CD14-positive monocyte (primary cell): ENCODE measurements at regions of chr16 and their contacts with region 1.

Region 1: DNA sequence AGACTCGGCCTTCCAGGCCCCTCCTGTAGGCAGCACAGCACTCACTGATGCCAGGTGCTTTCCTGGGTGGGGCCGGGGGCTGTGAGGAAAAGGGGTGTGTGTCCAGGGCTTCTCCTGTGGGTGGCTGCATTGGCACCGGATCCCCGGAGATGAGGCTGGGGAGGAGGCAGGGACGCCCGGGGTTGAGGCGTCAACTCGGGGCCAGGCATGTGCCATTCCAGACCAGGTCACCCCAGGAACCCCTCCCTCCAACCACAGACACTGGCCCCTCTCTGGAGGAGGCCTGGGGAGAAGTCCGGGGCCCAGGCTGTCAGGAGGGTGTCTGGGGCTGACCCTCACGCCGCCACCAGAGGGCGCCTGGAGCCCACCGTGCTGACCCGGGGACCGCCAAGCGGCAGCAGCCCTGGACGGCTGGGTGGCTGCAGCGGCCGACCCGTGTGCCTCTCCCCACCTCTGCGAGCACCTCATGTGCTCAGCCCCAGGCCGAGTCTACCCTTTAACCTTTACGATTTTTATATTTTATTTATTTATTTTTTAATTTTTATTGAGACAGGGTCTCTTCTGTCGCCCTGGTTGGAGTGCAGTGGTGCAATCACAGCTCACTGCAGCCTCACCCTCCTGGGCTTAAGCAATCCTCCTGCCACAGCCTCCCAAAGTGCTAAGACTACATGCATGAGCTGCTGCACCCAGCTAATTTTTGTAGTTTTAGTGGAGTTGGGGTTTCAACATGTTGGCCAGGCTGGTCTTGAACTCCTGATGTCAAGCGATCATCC is 3.2 kb upstream of the METRN start:
- DNase-seq: peak; percentile 67 to 79 (median 71)
- H3K4me3 ChIP-seq: no peak overlapping the region
- H3K4me3 Mint-ChIP-seq: no peak overlapping the region
- H3K27ac ChIP-seq: no peak overlapping the region
- H3K27ac Mint-ChIP-seq: no peak overlapping the region
- H3K4me1 ChIP-seq: peaks cover 12 to 22% of the 10 kb centered on the region in 2 donors
- H3K4me1 Mint-ChIP-seq: peaks cover 8% of the 10 kb centered on the region
- H3K27me3 ChIP-seq: peaks cover 13 to 67% of the 10 kb centered on the region in 2 donors
- H3K27me3 Mint-ChIP-seq: peaks cover 43 to 74% (median 66%) of the 10 kb centered on the region in 3 donors
- CTCF ChIP-seq: peak; percentile 95

Region 2: GRCh38 chr16:636206-637080 is 75.3 kb before region 1 on chr16 and contains the start of gene METTL26:
- intact Hi-C with region 1: no loop called
- DNase-seq: peak; percentile 93
- H3K4me3 ChIP-seq: peak within 1 kb of the TSS; percentile 70 to 96 (median 89)
- H3K4me3 Mint-ChIP-seq: peak within 1 kb of the TSS; percentile 95 to 97
- H3K27ac ChIP-seq: peak within 1 kb of the TSS; percentile 87 to 95
- H3K27ac Mint-ChIP-seq: peak within 1 kb of the TSS; percentile 94 to 99 (median 98)
- H3K4me1 ChIP-seq: peaks cover 30 to 38% of the 10 kb centered on the region in 2 donors
- H3K4me1 Mint-ChIP-seq: peaks cover 14% of the 10 kb centered on the region
- H3K27me3 ChIP-seq: no peaks in the 10 kb centered on the region
- H3K27me3 Mint-ChIP-seq: peaks cover 3 to 6% (median 3%) of the 10 kb centered on the region in 3 donors
- CTCF ChIP-seq: peak; percentile 18
- polyA plus RNA-seq, gene METTL26: 57.1 to 80.9 (median 70.4) TPM

Region 3: DNA sequence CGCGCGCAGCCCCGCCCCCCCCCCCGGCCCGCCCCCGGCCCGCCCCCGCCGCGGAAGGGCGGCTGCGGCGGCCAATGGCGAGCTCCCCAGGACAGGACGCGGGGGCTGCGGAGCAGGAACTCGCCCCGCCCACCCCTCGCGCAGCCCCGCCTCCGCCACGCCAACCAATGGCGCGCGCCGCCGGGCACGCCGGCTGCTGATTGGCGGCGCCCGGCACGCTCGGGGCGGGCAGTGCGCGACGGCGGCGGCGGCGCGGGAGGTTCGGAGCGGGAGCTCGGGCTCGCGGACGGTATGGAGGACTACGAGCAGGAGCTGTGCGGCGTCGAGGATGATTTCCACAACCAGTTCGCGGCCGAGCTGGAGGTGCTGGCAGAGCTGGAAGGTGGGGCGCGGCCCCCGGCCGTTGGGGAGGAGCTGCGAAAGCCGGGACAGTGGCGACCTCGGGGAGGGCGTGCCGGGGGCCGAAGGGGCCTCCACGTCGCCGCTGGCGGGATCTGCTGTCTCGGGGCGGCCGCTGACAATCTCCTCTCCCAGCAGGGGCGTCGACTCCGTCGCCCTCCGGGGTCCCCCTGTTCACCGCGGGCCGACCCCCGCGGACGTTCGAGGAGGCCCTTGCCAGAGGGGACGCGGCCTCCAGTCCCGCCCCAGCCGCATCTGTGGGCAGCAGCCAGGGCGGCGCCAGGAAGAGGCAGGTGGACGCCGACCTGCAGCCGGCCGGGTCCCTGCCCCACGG is 76.8 kb after region 1 on chr16 and contains the start of gene CHTF18:
- intact Hi-C with region 1: loop called (anchors 1 to 2 kb)
- DNase-seq: peak; percentile 88 to 93 (median 92)
- H3K4me3 ChIP-seq: peak within 1 kb of the TSS; percentile 90 to 92 (median 92)
- H3K4me3 Mint-ChIP-seq: peak within 1 kb of the TSS; percentile 81 to 90
- H3K27ac ChIP-seq: peak within 1 kb of the TSS in 1 of 2 donors; percentile 76
- H3K27ac Mint-ChIP-seq: peak within 1 kb of the TSS; percentile 24 to 90 (median 57)
- H3K4me1 ChIP-seq: peaks cover 20 to 32% of the 10 kb centered on the region in 2 donors
- H3K4me1 Mint-ChIP-seq: peaks cover 15% of the 10 kb centered on the region
- H3K27me3 ChIP-seq: no peaks in the 10 kb centered on the region
- H3K27me3 Mint-ChIP-seq: no peaks in the 10 kb centered on the region
- CTCF ChIP-seq: no peak
- polyA plus RNA-seq, gene CHTF18: 0.57 to 13.8 (median 2.2) TPM